ENCODE measurements at regions of chr16 and their contacts with region 1.

Region 1: DNA sequence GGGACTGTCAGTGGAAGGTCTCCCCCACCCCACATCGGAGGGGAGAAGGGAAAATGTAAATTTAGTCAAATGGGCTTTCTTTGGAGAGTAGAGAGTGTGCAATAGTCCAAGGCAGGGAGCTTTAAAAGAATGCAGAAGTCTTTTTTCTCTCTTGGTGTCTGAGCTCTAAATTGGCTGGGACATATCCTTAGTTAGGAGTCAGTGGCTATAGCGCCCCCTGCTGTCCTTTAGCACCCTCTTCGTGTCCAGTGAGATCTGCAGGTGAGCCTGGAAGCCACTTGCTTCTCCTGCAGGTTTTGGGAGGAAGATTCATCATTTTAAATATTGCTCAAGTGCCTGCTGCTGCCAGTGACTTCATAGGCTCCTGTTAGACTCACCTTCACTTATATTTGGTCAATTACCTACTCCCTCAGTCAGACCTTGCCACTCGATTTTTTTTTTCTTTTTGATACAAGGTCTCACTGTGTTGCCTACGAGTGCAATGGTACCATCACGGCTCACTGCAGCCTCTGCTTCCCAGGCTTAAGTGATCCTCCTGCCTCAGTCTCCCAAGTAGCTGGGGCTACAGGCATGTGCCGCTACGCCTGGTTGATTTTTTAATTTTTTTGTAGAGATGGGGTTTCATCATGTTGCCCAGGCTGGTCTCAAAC is 174.8 kb downstream of the PRKCB start:
- DNase-seq: peak; percentile 39
- ATAC-seq: peak; percentile 93
- H3K4me3 ChIP-seq: no peak overlapping the region
- H3K27ac ChIP-seq: no peak overlapping the region
- H3K4me1 ChIP-seq: no peaks in the 10 kb centered on the region
- H3K27me3 ChIP-seq: 0 out of 2 replicates have a peak, but pooled peaks cover 2% of the 10 kb centered on the region
- CTCF ChIP-seq: peak; percentile 88

Region 2: DNA sequence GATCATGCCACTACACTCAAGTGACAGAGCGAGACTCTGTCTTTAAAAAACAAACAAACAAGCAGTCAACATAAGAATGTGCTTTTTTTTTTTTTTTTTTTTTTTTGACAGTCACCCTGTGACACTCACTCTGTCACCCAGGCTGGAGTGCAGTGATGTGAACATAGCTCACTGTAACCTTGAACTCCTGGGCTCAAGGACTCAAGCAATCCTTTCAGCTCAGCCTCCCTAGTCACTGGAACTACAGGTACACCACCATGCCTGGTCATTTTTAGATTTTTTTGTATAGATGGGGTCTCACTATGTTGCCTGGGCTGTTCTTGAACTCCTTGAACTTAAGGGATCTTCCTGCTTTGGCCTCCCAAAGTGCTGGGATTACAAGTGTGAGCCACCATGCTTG is 271.0 kb before region 1 on chr16:
- CTCF ChIA-PET with region 1: no interaction called
- POLR2A ChIA-PET with region 1: no interaction called
- in situ Hi-C with region 1: no loop called
- intact Hi-C with region 1: loop called (anchors 5 kb)
- DNase-seq: no peak
- ATAC-seq: no peak
- H3K4me3 ChIP-seq: no peak overlapping the region
- H3K27ac ChIP-seq: no peak overlapping the region
- H3K4me1 ChIP-seq: no peaks in the 10 kb centered on the region
- H3K27me3 ChIP-seq: peaks cover 11% of the 10 kb centered on the region; the same call in 1 of the 2 replicates
- CTCF ChIP-seq: no peak

Region 3: GRCh38 chr16:23801378-23801777 is 209.2 kb before region 1 on chr16:
- CTCF ChIA-PET with region 1: interaction called, 12 read pairs
- POLR2A ChIA-PET with region 1: no interaction called
- in situ Hi-C with region 1: no loop called
- intact Hi-C with region 1: loop called (anchors 1 kb)
- DNase-seq: peak; percentile 43
- ATAC-seq: peak; percentile 94
- H3K4me3 ChIP-seq: no peak overlapping the region
- H3K27ac ChIP-seq: no peak overlapping the region
- H3K4me1 ChIP-seq: no peaks in the 10 kb centered on the region
- H3K27me3 ChIP-seq: peaks cover 5% of the 10 kb centered on the region; the same call in 1 of the 2 replicates
- CTCF ChIP-seq: peak; percentile 80

Region 4: GRCh38 chr16:23835390-23836077 is 175.0 kb before region 1 on chr16 and contains the start of gene PRKCB:
- CTCF ChIA-PET with region 1: no interaction called
- POLR2A ChIA-PET with region 1: no interaction called
- in situ Hi-C with region 1: no loop called
- intact Hi-C with region 1: no loop called
- DNase-seq: no peak
- ATAC-seq: no peak
- H3K4me3 ChIP-seq: no peak within 1 kb of the TSS
- H3K27ac ChIP-seq: no peak within 1 kb of the TSS
- H3K4me1 ChIP-seq: no peaks in the 10 kb centered on the region
- H3K27me3 ChIP-seq: peaks cover 8% of the 10 kb centered on the region; the same call in 1 of the 2 replicates
- CTCF ChIP-seq: no peak
- total RNA-seq, gene PRKCB: 0.41 TPM

Region 5: GRCh38 chr16:23877107-23878090 is 133.2 kb before region 1 on chr16:
- CTCF ChIA-PET with region 1: interaction called, 11 read pairs
- POLR2A ChIA-PET with region 1: no interaction called
- in situ Hi-C with region 1: no loop called
- intact Hi-C with region 1: loop called (anchors 1 kb)
- DNase-seq: no peak
- ATAC-seq: no peak
- H3K4me3 ChIP-seq: no peak overlapping the region
- H3K27ac ChIP-seq: no peak overlapping the region
- H3K4me1 ChIP-seq: no peaks in the 10 kb centered on the region
- H3K27me3 ChIP-seq: no peaks in the 10 kb centered on the region
- CTCF ChIP-seq: peak; percentile 38; the same call in 1 of the 2 replicates

Region 6: GRCh38 chr16:24088767-24089166 is 78.2 kb after region 1 on chr16:
- CTCF ChIA-PET with region 1: no interaction called
- POLR2A ChIA-PET with region 1: no interaction called
- in situ Hi-C with region 1: no loop called
- intact Hi-C with region 1: no loop called
- DNase-seq: no peak
- ATAC-seq: no peak
- H3K4me3 ChIP-seq: no peak overlapping the region
- H3K27ac ChIP-seq: no peak overlapping the region
- H3K4me1 ChIP-seq: no peaks in the 10 kb centered on the region
- H3K27me3 ChIP-seq: peaks cover 6% of the 10 kb centered on the region
- CTCF ChIP-seq: no peak

Region 7: GRCh38 chr16:24125214-24125613 is 114.6 kb after region 1 on chr16:
- CTCF ChIA-PET with region 1: no interaction called
- POLR2A ChIA-PET with region 1: no interaction called
- in situ Hi-C with region 1: no loop called
- intact Hi-C with region 1: no loop called
- DNase-seq: no peak
- ATAC-seq: no peak
- H3K4me3 ChIP-seq: no peak overlapping the region
- H3K27ac ChIP-seq: no peak overlapping the region
- H3K4me1 ChIP-seq: no peaks in the 10 kb centered on the region
- H3K27me3 ChIP-seq: peaks cover 17% of the 10 kb centered on the region
- CTCF ChIP-seq: no peak

Measured in Panc1 (cell line).